SK-N-SH (cell line): ENCODE measurements at regions of chr2 and their contacts with region 1.

Region 1: GRCh38 chr2:3651691-3652648 is 6.0 kb upstream of the ALLC start:
- DNase-seq: peak; percentile 74
- H3K4me3 ChIP-seq: no peak overlapping the region
- H3K27ac ChIP-seq: no peak overlapping the region
- H3K4me1 ChIP-seq: peaks cover 0 to 24% of the 10 kb centered on the region in 2 experiments; a peak in 2 of 4 replicates
- H3K27me3 ChIP-seq: no peaks in the 10 kb centered on the region
- CTCF ChIP-seq: no peak
- EP300 ChIP-seq: no peak
- RAD21 ChIP-seq: no peak

Region 2: GRCh38 chr2:3461801-3462492 is 190.0 kb before region 1 on chr2:
- CTCF ChIA-PET with region 1: interaction called, 14 read pairs
- POLR2A ChIA-PET with region 1: no interaction called
- DNase-seq: peak; percentile 89
- H3K4me3 ChIP-seq: no peak overlapping the region; a peak in 1 of 4 replicates
- H3K27ac ChIP-seq: peak overlapping the region in 1 of 2 experiments; percentile 43; a peak in 2 of 4 replicates
- H3K4me1 ChIP-seq: peaks cover 16 to 22% of the 10 kb centered on the region in 2 experiments; a peak in 3 of 4 replicates
- H3K27me3 ChIP-seq: no peaks in the 10 kb centered on the region
- CTCF ChIP-seq: peak; percentile 98
- EP300 ChIP-seq: no peak
- RAD21 ChIP-seq: peak; percentile 89

Region 3: GRCh38 chr2:3558205-3559014 is 93.6 kb before region 1 on chr2 and contains the start of gene RNASEH1:
- CTCF ChIA-PET with region 1: interaction called, 14 read pairs
- POLR2A ChIA-PET with region 1: interaction called, 3 read pairs
- DNase-seq: peak; percentile 100
- H3K4me3 ChIP-seq: peak within 1 kb of the TSS; percentile 90 to 93
- H3K27ac ChIP-seq: peak within 1 kb of the TSS; percentile 91 to 94
- H3K4me1 ChIP-seq: peaks cover 8 to 13% of the 10 kb centered on the region in 2 experiments; a peak in 2 of 4 replicates
- H3K27me3 ChIP-seq: no peaks in the 10 kb centered on the region
- CTCF ChIP-seq: no peak
- EP300 ChIP-seq: no peak
- RAD21 ChIP-seq: no peak; the same call in 1 of the 2 replicates
- polyA plus RNA-seq, gene RNASEH1: 34.4 and 35.3 TPM in 2 replicates

Region 4: DNA sequence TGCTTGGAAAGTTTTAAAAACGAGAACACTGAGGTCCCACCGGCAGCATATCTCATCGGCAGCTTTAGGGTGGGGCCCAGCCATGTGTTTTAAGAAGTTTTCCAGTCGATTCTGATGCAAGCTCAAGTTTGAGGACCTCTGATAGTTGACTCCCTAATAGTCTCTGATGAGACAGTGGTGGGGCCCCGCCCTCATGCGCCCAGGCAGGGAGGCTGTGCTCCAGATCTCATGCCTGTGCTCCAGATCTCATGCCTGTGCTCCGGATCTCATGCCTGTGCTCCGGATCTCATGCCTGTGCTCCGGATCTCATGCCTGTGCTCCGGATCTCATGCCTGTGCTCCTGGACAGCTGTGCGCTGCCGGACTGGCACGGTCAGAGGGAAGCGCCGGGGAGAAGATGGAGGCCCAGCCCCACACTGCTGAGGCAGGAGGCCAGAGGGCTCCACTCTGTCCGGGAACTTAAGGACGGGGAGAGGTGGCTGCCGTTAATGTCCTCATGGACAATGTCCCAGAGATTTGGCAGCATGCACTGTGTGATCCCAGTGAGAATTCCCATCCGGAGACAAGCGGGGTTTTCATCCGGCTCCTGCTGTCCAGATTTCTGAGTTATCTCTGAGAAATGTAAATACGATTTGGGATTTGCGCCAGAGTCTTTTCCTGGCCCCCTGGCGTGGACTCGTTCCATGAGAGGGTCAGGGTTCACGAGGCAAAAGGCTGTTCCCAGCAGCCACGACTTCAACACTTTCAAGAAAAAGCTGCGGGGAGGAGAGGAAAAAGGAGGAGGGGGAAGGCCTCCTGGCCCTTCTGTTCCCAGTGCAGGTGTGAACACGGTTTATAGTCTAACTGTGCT is 66.5 kb before region 1 on chr2:
- CTCF ChIA-PET with region 1: interaction called, 40 read pairs
- POLR2A ChIA-PET with region 1: interaction called, 15 read pairs
- DNase-seq: peak; percentile 82
- H3K4me3 ChIP-seq: no peak overlapping the region; a peak in 1 of 4 replicates
- H3K27ac ChIP-seq: peak overlapping the region; percentile 71 to 97
- H3K4me1 ChIP-seq: peaks cover 13 to 59% of the 10 kb centered on the region in 2 experiments
- H3K27me3 ChIP-seq: no peaks in the 10 kb centered on the region
- CTCF ChIP-seq: no peak
- EP300 ChIP-seq: peak in 1 of 2 experiments; percentile 57; a peak in 2 of 4 replicates
- RAD21 ChIP-seq: peak; percentile 19; the same call in 1 of the 2 replicates

Region 5: DNA sequence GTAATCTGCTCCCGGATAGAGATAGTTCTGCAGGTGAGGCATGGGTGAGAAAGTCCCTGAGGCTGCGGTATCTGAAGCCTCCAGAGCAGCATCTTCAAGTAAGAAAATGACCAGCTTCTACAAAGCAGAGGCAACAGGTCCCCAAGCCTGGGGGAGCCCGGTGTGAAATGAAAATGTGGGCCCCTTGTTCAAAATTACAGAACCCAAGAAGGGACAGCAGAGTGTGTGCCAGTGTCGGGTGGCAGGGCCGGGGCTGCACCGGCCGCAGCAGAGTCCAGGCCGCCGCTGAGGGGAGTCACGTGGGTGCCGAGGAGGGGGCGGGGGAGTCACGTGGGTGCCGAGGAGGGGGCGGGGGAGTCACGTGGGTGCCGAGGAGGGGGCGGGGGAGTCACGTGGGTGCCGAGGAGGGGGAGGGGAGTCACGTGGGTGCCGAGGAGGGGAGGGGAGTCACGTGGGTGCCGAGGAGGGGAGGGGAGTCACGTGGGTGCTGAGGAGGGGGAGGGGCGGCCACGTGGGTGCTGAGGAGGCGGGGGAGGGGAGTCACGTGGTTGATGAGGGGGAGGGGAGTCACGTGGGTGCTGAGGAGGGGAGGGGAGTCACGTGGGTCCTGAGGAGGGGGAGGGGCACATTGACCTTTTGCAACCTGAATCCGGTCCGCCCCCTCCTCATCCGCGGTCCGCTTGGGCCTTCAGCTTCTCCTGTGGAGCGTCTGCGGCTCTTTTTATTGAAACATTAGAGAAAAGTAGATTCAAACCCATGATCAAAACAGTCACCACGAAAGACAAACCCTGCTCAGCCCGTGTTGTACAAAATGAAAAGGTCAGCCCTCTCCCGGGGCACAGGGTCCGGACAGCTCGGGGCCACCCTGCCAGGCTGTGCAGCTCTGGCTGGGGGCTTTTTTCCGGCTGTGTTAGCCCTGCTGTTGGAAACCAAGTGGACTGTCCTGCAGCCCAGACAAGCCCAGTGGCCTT is 46.7 kb before region 1 on chr2:
- CTCF ChIA-PET with region 1: interaction called, 10 read pairs
- POLR2A ChIA-PET with region 1: interaction called, 7 read pairs
- DNase-seq: peak; percentile 97
- H3K4me3 ChIP-seq: no peak overlapping the region
- H3K27ac ChIP-seq: peak overlapping the region; percentile 56 to 99; a peak in 3 of 4 replicates
- H3K4me1 ChIP-seq: peaks cover 5 to 81% of the 10 kb centered on the region in 2 experiments; a peak in 3 of 4 replicates
- H3K27me3 ChIP-seq: no peaks in the 10 kb centered on the region
- CTCF ChIP-seq: no peak
- EP300 ChIP-seq: peak in 1 of 2 experiments; percentile 33; a peak in 2 of 4 replicates
- RAD21 ChIP-seq: peak; percentile 12; the same call in 1 of the 2 replicates